Right cardiac atrium (tissue), 5 donors: ENCODE measurements at regions of chr11 and their contacts with region 1.

Region 1: DNA sequence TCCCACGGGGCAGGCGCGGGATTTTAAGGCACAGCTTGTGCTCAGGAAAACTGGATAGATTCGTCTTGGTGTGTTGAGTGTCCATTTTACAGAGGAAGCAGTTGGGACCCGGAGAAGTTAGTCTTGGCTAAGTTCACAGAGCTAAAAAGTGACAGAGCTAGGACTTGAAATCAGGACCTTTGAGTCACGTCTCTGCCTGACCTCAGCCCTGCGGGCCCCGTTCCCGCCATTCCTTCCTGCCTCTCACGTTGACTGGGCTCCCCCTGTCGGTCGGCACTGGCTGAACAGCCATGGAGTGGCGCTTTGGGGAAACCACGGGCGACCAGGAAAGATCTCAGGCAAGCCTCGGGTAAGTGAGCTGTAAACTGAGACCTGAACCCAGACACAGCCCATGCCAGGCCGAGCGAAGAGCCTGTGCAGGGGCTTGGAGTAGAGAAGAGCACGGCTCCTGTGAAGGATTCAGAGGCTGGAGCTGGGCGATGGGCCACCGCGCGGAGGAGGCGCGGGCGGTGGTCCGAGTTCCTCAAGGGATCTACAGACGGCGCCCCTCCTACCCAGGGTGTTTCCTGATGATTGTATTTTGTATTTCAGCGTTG is 54.1 kb downstream of the WNT11 start:
- DNase-seq: peak; percentile 91 to 97 (median 95)
- ATAC-seq: peak; percentile 85 to 86
- H3K4me3 ChIP-seq: peak overlapping the region; percentile 39
- H3K27ac ChIP-seq: no peak overlapping the region
- H3K4me1 ChIP-seq: peaks cover 3% of the 10 kb centered on the region
- H3K27me3 ChIP-seq: no peaks in the 10 kb centered on the region

Region 2: DNA sequence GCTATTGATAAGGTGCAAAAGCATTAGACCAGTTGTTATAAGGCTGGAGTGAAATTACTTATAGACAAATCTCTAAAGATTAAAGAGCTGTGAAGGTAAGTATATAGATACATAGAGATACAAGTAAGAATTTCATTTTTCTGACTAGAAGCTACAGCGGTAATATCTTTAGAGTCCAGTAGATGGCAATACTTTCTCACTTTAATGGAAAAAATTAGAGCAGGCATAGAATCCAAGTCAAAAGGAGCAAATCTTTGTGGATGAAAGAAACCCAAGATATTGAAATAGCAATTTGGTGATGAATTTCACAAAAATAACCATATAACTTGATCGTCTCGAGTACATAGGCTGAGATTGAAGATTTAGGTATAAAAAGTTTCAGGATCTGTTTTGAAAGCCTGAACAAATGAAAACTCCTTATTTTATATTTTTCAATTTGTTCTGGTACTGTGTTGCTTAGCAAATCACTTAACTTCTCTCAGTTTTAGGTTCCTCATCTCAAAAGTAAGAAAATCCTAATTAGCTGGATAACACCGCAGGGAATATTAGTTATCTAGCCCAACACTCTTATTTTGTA is 255.3 kb before region 1 on chr11:
- intact Hi-C with region 1: loop called (anchors 2 to 5 kb)
- DNase-seq: no peak
- ATAC-seq: peak in 1 of 2 donors; percentile 49
- H3K4me3 ChIP-seq: no peak overlapping the region
- H3K27ac ChIP-seq: no peak overlapping the region
- H3K4me1 ChIP-seq: no peaks in the 10 kb centered on the region
- H3K27me3 ChIP-seq: no peaks in the 10 kb centered on the region